GM12878 (cell line): ENCODE measurements at regions of chr6 and their contacts with region 1.

Region 1: GRCh38 chr6:21049572-21049971 is 515.3 kb downstream of the CDKAL1 start:
- DNase-seq: no peak
- ATAC-seq: no peak
- H3K4me3 ChIP-seq: no peak overlapping the region
- H3K27ac ChIP-seq: no peak overlapping the region
- H3K4me1 ChIP-seq: no peaks in the 10 kb centered on the region
- H3K27me3 ChIP-seq: no peaks in the 10 kb centered on the region
- CTCF ChIP-seq: no peak
- EP300 ChIP-seq: no peak
- POLR2A ChIP-seq: no peak
- RAD21 ChIP-seq: no peak

Region 2: GRCh38 chr6:20789162-20789561 is 260.4 kb before region 1 on chr6:
- CTCF ChIA-PET with region 1: no interaction called
- POLR2A ChIA-PET with region 1: no interaction called
- RAD21 ChIA-PET with region 1: no interaction called
- SMC1A ChIA-PET with region 1: no interaction called
- in situ Hi-C with region 1: no loop called
- intact Hi-C with region 1: no loop called
- DNase-seq: no peak
- ATAC-seq: no peak
- H3K4me3 ChIP-seq: no peak overlapping the region
- H3K27ac ChIP-seq: no peak overlapping the region
- H3K4me1 ChIP-seq: peaks cover 3% of the 10 kb centered on the region; the same call in 1 of the 2 replicates
- H3K27me3 ChIP-seq: no peaks in the 10 kb centered on the region
- CTCF ChIP-seq: peak in 1 of 3 experiments; percentile 22; a peak in 1 of 6 replicates
- EP300 ChIP-seq: no peak
- POLR2A ChIP-seq: no peak
- RAD21 ChIP-seq: peak; percentile 43

Region 3: GRCh38 chr6:21087188-21087587 is 37.6 kb after region 1 on chr6:
- CTCF ChIA-PET with region 1: no interaction called
- POLR2A ChIA-PET with region 1: no interaction called
- RAD21 ChIA-PET with region 1: no interaction called
- SMC1A ChIA-PET with region 1: no interaction called
- in situ Hi-C with region 1: no loop called
- intact Hi-C with region 1: loop called (anchors 1 kb)
- DNase-seq: no peak
- ATAC-seq: no peak
- H3K4me3 ChIP-seq: no peak overlapping the region
- H3K27ac ChIP-seq: no peak overlapping the region
- H3K4me1 ChIP-seq: no peaks in the 10 kb centered on the region
- H3K27me3 ChIP-seq: no peaks in the 10 kb centered on the region
- CTCF ChIP-seq: no peak
- EP300 ChIP-seq: no peak
- POLR2A ChIP-seq: no peak
- RAD21 ChIP-seq: no peak